Left ventricle myocardium superior (tissue), 1 donor: ENCODE measurements at regions of chr6 and their contacts with region 1.

Region 1: DNA sequence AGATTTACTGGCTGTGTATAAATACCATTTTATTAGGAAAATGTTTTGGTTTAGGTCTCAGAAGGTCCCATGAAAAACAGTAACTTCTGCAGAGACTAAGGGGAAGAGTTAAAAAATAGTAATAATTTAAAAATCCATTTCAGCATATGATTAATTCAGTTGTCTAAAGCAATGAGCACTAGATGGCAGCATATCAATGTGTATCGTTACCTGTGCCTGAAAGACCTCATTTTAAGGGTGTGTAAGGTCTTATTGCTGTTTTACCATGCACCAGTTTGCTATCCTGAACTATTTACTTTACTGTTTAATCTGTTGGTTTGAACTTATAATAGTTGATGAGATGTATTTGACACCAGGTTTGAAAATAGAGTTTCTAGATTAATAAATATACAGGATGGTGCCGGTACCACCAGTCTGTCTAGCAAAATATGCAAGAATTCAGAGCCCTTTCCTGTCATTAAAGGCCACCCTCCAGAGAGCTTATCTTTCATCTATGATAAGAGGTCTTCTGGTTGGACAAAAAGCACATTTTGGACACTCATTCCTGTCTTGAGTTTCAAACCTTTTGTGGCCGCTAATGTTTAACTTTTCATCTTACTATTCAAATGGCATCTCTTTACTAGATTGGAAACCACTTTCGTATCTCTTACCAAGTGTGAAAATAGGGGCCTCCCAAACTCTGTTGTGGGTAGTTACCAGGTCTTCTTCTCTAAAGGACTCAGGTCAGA is 8.9 kb upstream of the AHI1 start:
- DNase-seq: no peak
- ATAC-seq: peak; percentile 41

Region 2: DNA sequence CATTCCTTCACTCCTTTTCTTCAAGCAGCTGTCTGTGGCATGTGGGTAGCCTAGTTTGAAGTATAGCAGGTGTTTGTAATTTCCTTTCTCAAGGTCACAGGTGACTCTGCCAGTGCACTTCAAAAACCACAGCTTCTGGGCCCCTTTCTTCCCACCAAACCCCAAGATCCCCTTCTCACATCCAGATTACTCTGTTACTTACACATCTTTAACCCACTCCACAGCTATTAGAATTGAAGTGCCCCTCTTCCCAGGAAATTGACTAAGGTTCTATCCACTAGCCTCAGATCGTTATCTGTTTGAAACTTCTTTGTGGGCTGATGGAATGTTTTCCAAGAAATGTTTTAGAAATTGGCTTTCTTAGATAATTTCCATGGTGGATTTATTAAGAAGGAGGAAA is 159.7 kb before region 1 on chr6:
- intact Hi-C with region 1: no loop called
- DNase-seq: no peak
- ATAC-seq: no peak

Region 3: DNA sequence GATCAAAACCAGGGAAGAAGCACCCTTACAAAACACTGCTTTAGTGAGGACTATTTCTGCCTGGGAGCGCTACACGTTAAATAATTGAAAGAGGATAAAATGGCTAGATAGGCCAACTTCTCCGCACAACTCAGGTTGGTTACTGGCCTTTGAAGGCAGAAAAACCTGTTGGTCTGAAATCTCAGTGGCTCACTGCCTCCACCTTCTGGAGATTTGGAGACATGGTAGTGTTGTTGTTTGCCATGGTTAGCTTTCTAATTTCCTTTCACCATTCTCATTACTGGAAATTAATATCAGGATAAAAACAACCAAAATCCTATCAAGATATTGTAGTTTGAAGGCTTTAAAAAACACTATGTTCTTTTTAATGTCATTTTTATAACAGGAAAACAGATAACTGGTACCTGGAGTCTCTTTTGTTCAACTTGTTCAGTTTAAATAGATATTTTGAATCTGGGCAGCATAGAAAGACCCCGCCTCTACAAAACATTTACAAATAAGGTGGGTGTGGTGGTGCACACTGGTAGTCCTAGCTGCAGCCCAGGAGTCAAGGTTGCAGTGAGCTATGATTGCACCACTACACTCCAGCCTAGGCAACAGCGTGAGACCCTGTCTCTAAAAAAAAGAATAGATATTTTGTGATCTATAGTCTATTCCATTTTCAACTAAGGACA is 810.7 kb after region 1 on chr6:
- intact Hi-C with region 1: loop called (anchors 10 kb)
- DNase-seq: no peak
- ATAC-seq: peak; percentile 65